ENCODE measurements at regions of chrX and their contacts with region 1.

Region 1: DNA sequence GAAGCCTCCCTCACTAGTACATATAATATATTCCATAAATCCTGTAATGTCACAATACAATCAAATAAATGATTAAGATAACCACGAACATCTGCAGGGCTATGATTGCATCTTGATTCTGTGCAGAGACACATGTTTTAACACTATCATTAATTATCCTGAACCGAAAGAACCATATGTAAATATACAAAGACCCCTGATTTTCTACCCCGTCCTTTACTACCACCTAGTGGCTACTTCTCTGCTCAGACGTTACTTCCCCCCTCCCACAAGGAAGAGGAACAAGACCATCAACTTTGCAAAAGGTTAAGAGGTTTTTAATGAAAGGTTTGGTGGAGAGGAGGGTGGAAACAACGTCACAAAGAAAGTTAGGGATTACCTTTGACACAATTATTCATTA is 134.0 kb downstream of the COL4A6 start:
- DNase-seq: no peak
- H3K4me3 ChIP-seq: no peak overlapping the region
- H3K27ac ChIP-seq: no peak overlapping the region
- H3K27me3 ChIP-seq: no peaks in the 10 kb centered on the region
- CTCF ChIP-seq: peak; percentile 63

Region 2: DNA sequence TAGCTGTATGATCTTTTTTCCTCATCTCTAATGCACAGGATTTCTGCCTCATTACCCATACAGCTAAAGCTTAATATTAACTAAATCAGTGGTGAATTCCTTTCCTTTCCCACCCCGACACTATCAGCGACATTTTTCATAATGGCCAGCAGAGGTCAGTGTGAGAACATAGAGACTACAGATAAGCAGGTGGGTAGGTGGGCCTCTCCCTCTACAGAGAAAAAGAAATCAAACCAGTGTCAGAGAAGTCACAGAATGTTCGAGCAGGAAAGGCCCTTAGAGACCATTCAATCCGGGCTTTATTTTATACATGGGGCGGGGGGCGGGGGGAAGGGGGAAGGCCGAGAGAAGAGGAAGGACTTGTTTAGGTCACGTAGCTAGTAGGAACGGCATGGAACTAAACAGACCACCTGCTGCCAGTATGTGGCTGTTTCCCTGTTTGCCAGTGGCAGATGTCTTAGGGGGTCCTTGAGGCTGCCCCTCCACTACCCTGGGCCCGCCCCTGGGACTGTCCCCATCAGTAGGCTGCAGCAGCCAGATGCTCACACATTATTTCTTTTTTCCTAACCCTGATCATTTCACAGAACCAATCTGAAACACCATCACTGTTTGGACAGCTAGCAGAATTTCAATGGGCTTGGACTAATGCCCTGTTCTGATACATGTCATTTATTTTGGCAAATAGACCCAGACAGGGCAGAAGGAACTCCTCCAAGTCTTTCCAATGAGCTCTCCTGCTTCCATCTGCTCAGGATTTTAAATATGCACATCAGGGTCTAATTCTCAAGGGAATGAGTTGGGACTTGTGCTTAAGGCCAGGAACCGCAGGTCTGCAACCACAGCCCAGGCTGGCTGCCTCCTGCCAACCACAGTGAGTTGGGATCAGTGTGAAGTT is 79.2 kb before region 1 on chrX:
- CTCF ChIA-PET with region 1: interaction called, 38 read pairs
- POLR2A ChIA-PET with region 1: no interaction called
- DNase-seq: no peak
- H3K4me3 ChIP-seq: no peak overlapping the region
- H3K27ac ChIP-seq: no peak overlapping the region
- H3K27me3 ChIP-seq: no peaks in the 10 kb centered on the region
- CTCF ChIP-seq: peak; percentile 56